Left cardiac atrium (tissue), 4 donors: ENCODE measurements at regions of chr17 and their contacts with region 1.

Region 1: GRCh38 chr17:979538-980405 is at the start of gene NXN:
- DNase-seq: peak; percentile 88
- ATAC-seq: peak; percentile 95 to 98
- total RNA-seq, gene NXN: 16.7 to 20.8 TPM

Region 2: GRCh38 chr17:781805-782731 is 197.7 kb before region 1 on chr17 and contains the starts of genes GLOD4 and MRM3:
- intact Hi-C with region 1: loop called in 1 of 2 experiments (anchors 5 kb)
- DNase-seq: peak; percentile 94
- ATAC-seq: peak; percentile 99
- total RNA-seq, gene GLOD4: 32.7 to 41.1 TPM
- total RNA-seq, gene MRM3: 14.9 to 17.7 TPM

Region 3: DNA sequence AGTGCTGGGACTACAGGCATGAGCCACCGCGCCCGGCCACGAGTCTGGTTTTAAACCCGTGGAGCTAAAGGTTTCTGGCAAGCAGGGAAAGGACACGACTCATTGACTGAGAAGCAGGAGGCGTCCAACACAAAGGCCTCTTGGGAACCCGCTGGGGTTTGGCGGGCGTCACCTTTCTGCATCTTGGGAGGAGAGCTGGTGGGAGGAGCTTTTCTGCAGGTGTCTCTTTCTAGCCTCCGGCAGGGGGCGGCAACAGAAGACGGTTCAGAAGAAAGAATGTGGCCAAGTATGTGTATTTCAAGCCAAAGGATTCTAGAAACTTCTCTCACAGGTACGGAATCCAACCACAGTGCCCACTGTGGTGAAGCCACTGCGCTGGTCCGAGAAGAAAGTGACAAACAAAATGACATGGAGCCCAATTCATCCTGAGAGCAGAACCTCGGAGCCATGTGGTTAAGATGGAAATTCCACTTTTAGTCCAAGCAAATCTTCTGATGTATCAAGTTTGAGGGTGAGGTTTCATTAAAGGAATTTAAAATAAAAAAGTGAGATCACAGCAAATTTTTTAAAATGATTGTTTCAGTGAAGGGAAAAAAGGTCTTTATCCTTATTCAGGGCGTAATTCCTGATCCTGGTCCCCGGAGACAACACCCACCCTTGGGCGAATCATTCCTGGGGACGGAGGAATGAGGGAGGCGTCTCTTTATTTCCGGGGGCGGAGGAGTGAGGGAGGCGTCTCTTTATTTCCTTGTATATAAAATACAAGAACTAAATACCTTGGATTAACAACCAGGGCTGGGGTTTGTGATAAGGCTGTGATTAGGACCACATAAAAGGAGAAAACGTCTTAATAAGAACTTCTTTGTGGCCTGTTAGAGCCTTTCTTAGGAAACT is 100.0 kb before region 1 on chr17:
- intact Hi-C with region 1: loop called in 1 of 2 experiments (anchors 5 kb)
- DNase-seq: peak; percentile 84
- ATAC-seq: peak; percentile 55 to 77

Region 4: GRCh38 chr17:915538-916201 is 64.1 kb before region 1 on chr17:
- intact Hi-C with region 1: no loop called
- DNase-seq: peak; percentile 76
- ATAC-seq: peak; percentile 50 to 57